Right ventricle myocardium inferior (tissue), 1 donor: ENCODE measurements at regions of chr12 and their contacts with region 1.

Region 1: DNA sequence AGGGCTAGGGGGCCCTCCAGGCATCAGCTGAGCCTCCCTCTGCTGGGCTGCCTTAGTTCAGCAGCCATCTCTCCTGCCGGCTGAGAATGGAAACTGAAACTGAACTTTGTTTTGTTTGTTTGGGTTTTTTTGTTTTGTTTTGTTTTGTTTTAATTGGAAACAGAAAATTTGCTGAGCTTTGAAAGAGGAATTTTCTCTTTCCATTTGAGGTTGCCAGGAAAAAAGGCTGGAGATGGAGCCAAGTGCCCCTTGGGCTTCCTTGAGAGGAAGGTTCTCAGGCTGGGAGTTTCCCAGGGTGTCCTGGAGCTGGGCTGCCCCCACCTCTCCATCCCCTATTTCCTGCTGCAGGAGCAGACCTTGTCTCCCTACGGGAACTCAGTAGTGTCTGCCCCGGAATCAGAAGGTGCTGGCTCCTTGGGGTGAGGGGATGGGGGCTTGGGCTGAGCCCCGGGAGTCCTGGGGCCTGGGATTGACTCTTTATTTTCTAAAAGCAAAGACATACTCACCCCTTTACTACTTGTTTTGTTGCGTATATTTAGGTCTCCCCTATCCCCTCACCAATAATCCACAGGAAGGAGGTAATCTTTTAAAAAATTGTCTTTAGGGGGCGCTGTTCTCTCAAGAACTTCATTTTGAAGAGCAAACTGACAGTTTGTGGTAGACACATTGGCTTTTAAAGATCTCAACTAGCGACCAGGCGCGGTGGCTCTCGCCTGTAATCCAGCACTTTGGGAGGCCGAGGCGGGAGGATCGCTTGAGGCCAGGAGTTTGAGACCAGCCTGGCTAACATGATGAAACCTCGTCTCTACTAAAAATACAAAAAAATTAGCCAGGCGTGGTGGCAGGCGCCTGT is 21.3 kb upstream of the OASL start:
- DNase-seq: no peak
- ATAC-seq: peak; percentile 48

Region 2: DNA sequence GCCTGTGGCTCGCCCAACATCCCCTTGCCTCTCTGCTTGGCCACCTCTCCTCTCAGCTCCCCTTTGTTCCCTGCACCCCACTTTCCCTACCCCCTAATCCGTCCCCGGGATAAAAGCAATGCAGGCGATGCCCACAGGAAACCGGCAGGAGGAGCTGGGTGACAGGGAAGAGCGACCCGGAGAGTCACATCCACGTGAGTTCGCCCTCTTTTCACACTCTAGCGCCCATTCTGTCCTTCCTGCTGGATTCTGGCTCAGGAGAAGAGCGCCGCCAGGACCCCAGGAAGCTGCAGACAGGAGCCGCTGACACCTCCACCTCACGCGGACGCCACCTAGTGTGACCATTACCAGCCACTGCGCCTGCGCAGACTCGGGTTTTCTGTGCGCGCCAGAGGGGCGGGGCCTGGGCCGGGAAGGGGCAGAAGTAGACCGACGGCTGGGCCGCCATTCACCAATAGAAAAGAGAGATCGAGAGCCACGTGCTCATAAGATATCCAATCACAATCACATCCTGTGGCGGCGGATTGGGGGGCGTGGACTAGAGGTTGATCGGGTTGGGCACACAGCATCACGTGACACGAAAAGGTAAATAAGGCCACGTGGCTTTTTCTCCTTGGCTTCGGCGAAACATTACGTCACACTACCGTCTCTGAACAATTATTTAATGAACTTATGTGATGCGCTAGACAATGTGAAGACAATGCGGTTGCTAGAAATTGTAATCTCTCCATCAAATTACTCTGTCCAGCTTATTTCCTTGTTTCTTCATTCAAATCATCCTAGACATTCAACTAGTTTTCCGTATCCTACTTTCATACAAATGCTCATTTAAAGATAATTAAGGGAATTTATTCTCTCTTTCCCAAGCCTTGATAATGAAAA is 742.9 kb before region 1 on chr12:
- intact Hi-C with region 1: no loop called
- DNase-seq: peak; percentile 100
- ATAC-seq: peak; percentile 100

Region 3: DNA sequence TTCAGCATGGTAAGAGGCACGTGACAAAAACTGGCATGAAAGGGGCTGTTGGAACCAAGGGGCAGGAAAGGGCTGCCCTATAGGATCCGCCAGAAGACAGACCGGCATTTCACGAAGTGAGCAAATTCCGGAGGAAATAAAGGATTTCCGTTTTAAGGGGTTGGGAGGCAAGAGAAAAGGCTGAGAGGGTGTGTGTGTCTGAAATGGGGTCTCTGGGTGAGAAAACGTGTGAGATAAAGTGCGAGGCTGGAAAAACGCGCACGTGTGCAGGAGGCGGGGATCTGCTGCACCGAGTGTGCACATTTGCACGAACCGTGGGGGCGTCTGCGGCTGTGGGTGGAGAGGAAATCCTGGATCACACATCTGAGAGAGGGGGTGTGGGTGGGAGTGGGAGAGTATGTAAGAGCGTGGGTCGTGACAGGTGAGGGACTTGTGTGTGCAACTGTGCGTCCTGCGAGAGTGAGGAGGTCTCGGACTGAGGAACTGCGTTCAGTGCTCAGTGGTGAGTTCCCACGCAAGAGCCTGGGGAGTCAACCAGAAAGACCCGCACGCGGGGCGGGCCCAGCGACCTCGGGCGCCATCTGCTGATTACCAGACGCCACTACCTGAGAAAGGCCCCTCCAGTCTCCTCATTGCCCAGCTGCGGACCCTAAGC is 35.3 kb after region 1 on chr12:
- intact Hi-C with region 1: loop called (anchors 5 kb)
- DNase-seq: peak; percentile 89
- ATAC-seq: peak; percentile 88

Region 4: GRCh38 chr12:121110211-121110940 is 50.0 kb after region 1 on chr12:
- intact Hi-C with region 1: loop called (anchors 1 kb)
- DNase-seq: no peak
- ATAC-seq: peak; percentile 74